Activated CD4-positive, alpha-beta T cell treated with anti-CD3 and anti-CD28 coated beads for 36 hours (primary cell): ENCODE measurements at regions of chr2 and their contacts with region 1.

Region 1: DNA sequence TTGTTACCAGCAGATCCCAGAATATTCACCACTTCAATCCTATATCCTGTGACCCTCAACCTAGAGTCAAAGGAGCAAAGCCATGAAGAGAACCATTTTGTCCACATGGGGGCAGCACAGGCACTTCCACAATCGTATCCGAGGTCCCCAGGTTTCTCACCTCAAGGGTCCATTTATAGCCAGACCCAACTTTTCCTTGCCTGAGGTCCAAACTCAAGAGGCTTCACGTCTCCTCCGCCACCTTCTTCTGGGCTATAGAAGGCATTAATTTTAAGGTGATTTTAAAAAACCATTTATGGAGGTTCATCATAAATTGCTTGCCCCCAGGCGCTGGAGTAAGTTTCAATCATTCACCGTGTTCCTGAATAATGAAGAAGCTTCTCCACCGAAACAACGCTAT is 111.6 kb upstream of the NABP1 start:
- DNase-seq: peak; percentile 81
- ATAC-seq: peak; percentile 70
- H3K4me3 Mint-ChIP-seq: no peak overlapping the region
- H3K27ac Mint-ChIP-seq: no peak overlapping the region
- H3K4me1 Mint-ChIP-seq: peaks cover 16% of the 10 kb centered on the region
- H3K27me3 Mint-ChIP-seq: peaks cover 19% of the 10 kb centered on the region

Region 2: GRCh38 chr2:190005513-190005912 is 1560.8 kb before region 1 on chr2:
- CTCF ChIA-PET with region 1: no interaction called
- POLR2A ChIA-PET with region 1: no interaction called
- intact Hi-C with region 1: no loop called
- DNase-seq: no peak
- ATAC-seq: no peak
- H3K4me3 Mint-ChIP-seq: no peak overlapping the region
- H3K27ac Mint-ChIP-seq: no peak overlapping the region
- H3K4me1 Mint-ChIP-seq: no peaks in the 10 kb centered on the region
- H3K27me3 Mint-ChIP-seq: peaks cover 2% of the 10 kb centered on the region

Region 3: GRCh38 chr2:191501561-191502168 is 64.7 kb before region 1 on chr2:
- CTCF ChIA-PET with region 1: no interaction called
- POLR2A ChIA-PET with region 1: no interaction called
- intact Hi-C with region 1: no loop called
- DNase-seq: no peak
- ATAC-seq: no peak
- H3K4me3 Mint-ChIP-seq: no peak overlapping the region
- H3K27ac Mint-ChIP-seq: no peak overlapping the region
- H3K4me1 Mint-ChIP-seq: no peaks in the 10 kb centered on the region
- H3K27me3 Mint-ChIP-seq: peaks cover 6% of the 10 kb centered on the region

Region 4: DNA sequence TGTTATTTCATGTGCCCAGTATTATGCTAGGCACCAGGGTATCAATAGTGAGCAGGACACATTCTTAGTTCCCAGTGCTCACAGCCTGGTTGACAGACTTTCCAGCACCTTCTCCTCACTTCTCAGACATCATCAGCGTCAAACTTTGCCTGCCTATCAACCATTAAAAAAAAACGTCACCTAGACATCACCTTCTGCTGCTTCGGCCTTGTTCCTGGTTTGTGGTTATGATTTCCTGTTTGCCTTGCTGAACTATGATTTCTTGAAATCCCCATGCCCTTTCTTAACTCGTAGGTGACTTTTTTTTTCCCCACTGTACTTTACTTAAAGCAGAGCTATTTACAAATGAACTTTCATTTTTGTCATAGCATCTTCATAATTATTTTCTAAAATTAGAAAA is 51.2 kb after region 1 on chr2:
- CTCF ChIA-PET with region 1: interaction called, 5 read pairs
- POLR2A ChIA-PET with region 1: no interaction called
- intact Hi-C with region 1: loop called in 1 of 2 experiments (anchors 5 kb)
- DNase-seq: peak; percentile 61
- ATAC-seq: peak; percentile 80
- H3K4me3 Mint-ChIP-seq: peak overlapping the region; percentile 47
- H3K27ac Mint-ChIP-seq: peak overlapping the region; percentile 99
- H3K4me1 Mint-ChIP-seq: peaks cover 52% of the 10 kb centered on the region
- H3K27me3 Mint-ChIP-seq: no peaks in the 10 kb centered on the region

Region 5: DNA sequence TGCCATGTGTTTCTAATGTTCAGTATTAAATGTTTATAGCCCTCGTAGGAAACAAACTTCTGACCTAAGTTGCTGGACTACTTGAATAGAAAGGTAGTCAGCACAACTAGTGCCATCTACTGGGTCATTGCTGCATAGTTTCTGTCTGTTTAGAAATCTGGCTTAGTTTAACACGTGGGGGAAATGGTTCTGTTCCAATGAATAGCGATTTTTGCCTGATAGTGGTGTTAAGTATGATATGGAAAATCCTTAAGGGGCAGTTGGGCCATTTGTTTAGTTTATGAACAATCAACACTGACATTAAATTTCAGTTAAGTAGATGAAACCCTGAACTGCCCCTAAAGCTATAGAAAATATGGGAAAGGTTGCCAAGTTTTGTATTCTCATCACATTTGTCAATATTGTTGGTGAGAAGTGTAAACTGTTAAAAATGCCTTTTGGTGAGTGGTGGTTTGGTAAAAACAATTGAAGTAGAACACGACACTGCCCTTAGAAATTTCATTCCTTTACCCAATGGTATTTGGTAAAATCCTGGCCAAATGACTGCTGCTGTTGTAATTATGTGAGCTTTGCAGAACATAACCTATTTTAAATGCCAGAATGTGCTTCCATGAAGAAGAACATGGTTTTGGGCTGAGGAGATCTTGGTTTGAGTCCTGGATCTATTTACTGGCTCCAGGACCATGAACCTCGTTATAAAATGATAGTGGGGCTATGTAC is 124.8 kb after region 1 on chr2:
- CTCF ChIA-PET with region 1: interaction called, 41 read pairs
- POLR2A ChIA-PET with region 1: no interaction called
- intact Hi-C with region 1: loop called (anchors 1 kb)
- DNase-seq: peak; percentile 58
- ATAC-seq: peak; percentile 43
- H3K4me3 Mint-ChIP-seq: peak overlapping the region; percentile 25
- H3K27ac Mint-ChIP-seq: peak overlapping the region; percentile 77
- H3K4me1 Mint-ChIP-seq: peaks cover 56% of the 10 kb centered on the region
- H3K27me3 Mint-ChIP-seq: no peaks in the 10 kb centered on the region

Region 6: GRCh38 chr2:191706791-191707190 is 140.4 kb after region 1 on chr2:
- CTCF ChIA-PET with region 1: interaction called, 10 read pairs
- POLR2A ChIA-PET with region 1: no interaction called
- intact Hi-C with region 1: no loop called
- DNase-seq: no peak
- ATAC-seq: no peak
- H3K4me3 Mint-ChIP-seq: no peak overlapping the region
- H3K27ac Mint-ChIP-seq: no peak overlapping the region
- H3K4me1 Mint-ChIP-seq: no peaks in the 10 kb centered on the region
- H3K27me3 Mint-ChIP-seq: no peaks in the 10 kb centered on the region

Region 7: GRCh38 chr2:191740016-191740419 is 173.7 kb after region 1 on chr2:
- CTCF ChIA-PET with region 1: interaction called, 4 read pairs
- POLR2A ChIA-PET with region 1: interaction called, 3 read pairs
- intact Hi-C with region 1: loop called in 1 of 2 experiments (anchors 5 kb)
- DNase-seq: peak; percentile 56
- ATAC-seq: peak; percentile 97
- H3K4me3 Mint-ChIP-seq: no peak overlapping the region
- H3K27ac Mint-ChIP-seq: peak overlapping the region; percentile 66
- H3K4me1 Mint-ChIP-seq: peaks cover 12% of the 10 kb centered on the region
- H3K27me3 Mint-ChIP-seq: peaks cover 10% of the 10 kb centered on the region